Activated CD8-positive, alpha-beta T cell treated with anti-CD3 and anti-CD28 coated beads, Interleukin-2, amount 10 ng/mL, durations not matched to agents 7 days and 5 days (primary cell): ENCODE measurements at regions of chr1 and their contacts with region 1.

Region 1: GRCh38 chr1:40338745-40339424 is 21.8 kb upstream of the COL9A2 start:
- DNase-seq: peak; percentile 92
- ATAC-seq: peak; percentile 91
- H3K4me3 Mint-ChIP-seq: peak overlapping the region; percentile 32
- H3K27ac Mint-ChIP-seq: peak overlapping the region; percentile 59
- H3K4me1 Mint-ChIP-seq: peaks cover 45% of the 10 kb centered on the region
- H3K27me3 Mint-ChIP-seq: no peaks in the 10 kb centered on the region

Region 2: GRCh38 chr1:40143891-40144575 is 194.9 kb before region 1 on chr1:
- CTCF ChIA-PET with region 1: interaction called, 133 read pairs
- POLR2A ChIA-PET with region 1: no interaction called
- DNase-seq: peak; percentile 67
- ATAC-seq: peak; percentile 73
- H3K4me3 Mint-ChIP-seq: no peak overlapping the region
- H3K27ac Mint-ChIP-seq: no peak overlapping the region
- H3K4me1 Mint-ChIP-seq: peaks cover 3% of the 10 kb centered on the region
- H3K27me3 Mint-ChIP-seq: peaks cover 45% of the 10 kb centered on the region

Region 3: DNA sequence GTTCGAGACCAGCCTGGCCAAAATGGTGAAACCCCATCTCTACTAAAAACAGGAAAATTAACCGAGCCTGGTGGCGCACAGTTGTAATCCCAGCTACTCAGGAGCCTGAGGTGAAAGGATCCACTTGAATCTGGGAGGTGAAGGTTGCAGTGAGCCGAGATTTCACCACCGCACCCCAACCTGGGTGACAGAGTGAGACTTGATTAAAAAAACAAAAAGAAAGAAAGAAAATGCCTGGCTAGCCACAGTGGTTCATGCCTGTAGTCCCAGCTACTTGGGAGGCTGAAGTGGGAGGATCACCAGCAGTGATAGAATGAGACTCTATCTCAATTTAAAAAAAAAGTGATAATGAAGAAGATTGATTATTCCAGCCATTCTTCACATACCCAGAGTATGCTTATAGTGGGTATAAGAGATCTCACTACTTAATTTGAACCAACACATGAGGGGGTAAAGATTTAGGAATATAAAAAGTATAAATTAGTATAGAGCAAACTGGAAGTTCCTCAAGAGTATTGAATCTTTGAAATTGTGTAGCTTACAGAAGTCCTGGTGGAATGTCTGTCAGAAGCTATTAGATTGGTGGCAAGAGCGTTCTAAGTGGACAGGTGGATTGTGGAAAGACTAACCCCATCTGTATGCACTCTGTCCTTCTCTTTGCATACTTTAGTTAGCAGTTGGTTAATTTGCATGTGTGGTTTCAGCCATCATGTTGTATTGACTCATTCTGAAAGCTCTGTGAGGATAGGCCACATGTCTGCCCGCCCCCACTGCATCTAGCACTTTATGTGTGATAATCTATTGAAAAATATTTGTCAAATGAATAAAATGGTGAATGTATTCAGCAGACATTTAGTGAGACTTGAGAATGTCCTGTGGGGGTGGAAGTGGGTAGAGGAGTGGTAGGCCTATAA is 152.7 kb before region 1 on chr1:
- CTCF ChIA-PET with region 1: interaction called, 11 read pairs
- POLR2A ChIA-PET with region 1: interaction called, 3 read pairs
- DNase-seq: peak; percentile 60
- ATAC-seq: peak; percentile 88
- H3K4me3 Mint-ChIP-seq: no peak overlapping the region
- H3K27ac Mint-ChIP-seq: peak overlapping the region; percentile 19
- H3K4me1 Mint-ChIP-seq: peaks cover 46% of the 10 kb centered on the region
- H3K27me3 Mint-ChIP-seq: no peaks in the 10 kb centered on the region

Region 4: DNA sequence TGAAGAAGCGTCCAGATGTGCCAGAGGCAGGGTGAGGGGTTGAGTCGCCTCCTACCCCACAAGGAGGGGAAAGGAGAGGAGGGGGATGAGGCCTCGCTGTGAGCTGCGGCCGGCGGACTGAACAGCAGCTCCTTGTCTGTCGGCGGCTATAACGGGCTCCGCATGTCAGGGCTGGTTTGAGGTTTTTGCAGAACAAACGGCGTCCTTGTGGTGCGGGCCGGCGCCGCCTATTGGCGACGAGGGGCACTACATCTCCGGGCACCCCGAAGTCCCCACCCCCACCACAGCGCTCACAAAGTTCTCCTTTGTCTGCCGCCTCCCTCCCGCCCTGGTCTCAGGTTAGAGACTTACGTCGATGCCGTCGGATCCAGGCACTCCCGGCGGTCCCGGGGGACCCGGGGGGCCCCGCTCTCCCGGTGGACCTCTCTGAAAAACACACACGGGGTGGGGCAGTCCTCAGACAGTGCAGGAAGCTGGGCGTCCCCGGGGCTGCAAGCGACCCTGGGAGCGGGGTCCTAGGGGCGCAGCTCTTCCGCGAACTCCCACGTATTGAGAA is 23.6 kb before region 1 on chr1:
- CTCF ChIA-PET with region 1: interaction called, 191 read pairs
- POLR2A ChIA-PET with region 1: interaction called, 3 read pairs
- DNase-seq: peak; percentile 90
- ATAC-seq: peak; percentile 80
- H3K4me3 Mint-ChIP-seq: peak overlapping the region; percentile 74
- H3K27ac Mint-ChIP-seq: no peak overlapping the region
- H3K4me1 Mint-ChIP-seq: peaks cover 52% of the 10 kb centered on the region
- H3K27me3 Mint-ChIP-seq: peaks cover 27% of the 10 kb centered on the region

Region 5: DNA sequence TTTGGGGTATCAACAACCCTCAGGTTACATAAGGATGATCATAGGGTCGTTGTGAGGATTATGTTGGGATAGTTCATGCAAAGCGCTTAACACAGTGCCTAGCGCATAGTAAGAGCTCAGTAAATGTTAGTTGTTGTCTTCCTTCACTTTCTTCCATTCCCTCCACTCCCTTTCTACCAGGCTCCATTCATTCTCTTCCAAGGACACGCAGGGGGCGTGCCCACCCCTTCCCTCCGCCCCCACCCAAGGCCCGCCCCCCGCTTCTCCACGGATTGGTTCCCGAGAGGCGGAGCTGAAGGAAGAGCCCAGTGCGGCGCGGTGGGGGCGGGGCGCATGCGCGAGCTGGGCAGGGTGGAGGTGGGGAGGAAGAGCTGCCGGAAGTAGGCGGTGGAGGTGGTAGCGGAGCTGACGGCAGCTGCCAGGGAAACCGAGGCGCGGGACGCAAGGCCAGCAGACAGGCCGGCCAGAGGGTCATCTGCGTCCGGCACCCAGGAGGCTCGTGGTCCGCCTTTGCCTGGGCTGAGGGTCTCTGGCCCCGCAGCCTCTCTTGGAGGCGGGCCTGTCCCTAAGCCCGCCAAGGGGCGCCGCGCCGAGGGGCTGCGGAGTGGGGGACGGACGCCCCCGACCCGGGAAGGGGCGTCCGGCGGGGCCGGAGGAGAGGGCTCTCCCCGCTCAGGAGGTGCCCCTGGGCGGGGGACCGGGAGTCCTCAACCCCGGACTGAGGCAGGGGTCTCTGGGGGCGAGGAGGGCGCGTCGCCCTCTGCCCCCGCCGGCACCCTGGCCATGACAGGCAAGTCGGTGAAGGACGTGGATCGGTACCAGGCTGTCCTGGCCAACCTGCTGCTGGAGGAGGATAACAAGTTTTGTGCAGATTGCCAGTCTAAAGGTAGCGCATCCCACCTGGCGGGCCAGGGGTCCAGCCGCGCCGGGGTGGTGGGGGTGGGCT is 34.7 kb after region 1 on chr1 and contains the start of gene SMAP2:
- CTCF ChIA-PET with region 1: interaction called, 21 read pairs
- POLR2A ChIA-PET with region 1: interaction called, 18 read pairs
- DNase-seq: peak; percentile 97
- ATAC-seq: peak; percentile 87
- H3K4me3 Mint-ChIP-seq: peak within 1 kb of the TSS; percentile 94
- H3K27ac Mint-ChIP-seq: peak within 1 kb of the TSS; percentile 97
- H3K4me1 Mint-ChIP-seq: peaks cover 42% of the 10 kb centered on the region
- H3K27me3 Mint-ChIP-seq: no peaks in the 10 kb centered on the region
- total RNA-seq, gene SMAP2: 106 to 107 TPM

Region 6: DNA sequence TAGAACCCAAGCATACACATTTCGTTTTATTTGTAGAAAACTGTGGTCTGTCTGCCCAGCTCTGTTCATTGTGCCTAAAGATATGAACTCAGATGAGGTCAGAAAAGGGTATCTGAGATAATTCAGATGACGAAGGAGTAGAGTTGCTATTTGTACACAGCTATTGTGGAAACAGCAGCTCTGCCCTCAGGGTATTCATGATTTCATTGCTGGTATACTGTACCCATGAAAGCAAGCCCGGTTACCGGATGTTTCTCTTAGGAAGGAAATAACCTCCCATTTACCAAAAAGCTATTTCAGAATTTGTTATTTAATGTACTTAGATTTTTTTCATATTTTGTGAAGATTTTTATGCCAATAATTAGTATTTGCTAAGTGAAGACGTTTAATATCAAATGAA is 72.4 kb after region 1 on chr1:
- CTCF ChIA-PET with region 1: interaction called, 200 read pairs
- POLR2A ChIA-PET with region 1: no interaction called
- DNase-seq: no peak
- ATAC-seq: no peak
- H3K4me3 Mint-ChIP-seq: no peak overlapping the region
- H3K27ac Mint-ChIP-seq: no peak overlapping the region
- H3K4me1 Mint-ChIP-seq: peaks cover 32% of the 10 kb centered on the region
- H3K27me3 Mint-ChIP-seq: no peaks in the 10 kb centered on the region

Region 7: GRCh38 chr1:40612345-40612831 is 273.5 kb after region 1 on chr1:
- CTCF ChIA-PET with region 1: no interaction called
- POLR2A ChIA-PET with region 1: no interaction called
- DNase-seq: peak; percentile 85
- ATAC-seq: peak; percentile 91
- H3K4me3 Mint-ChIP-seq: no peak overlapping the region
- H3K27ac Mint-ChIP-seq: no peak overlapping the region
- H3K4me1 Mint-ChIP-seq: no peaks in the 10 kb centered on the region
- H3K27me3 Mint-ChIP-seq: peaks cover 5% of the 10 kb centered on the region